ENCODE measurements at regions of chr2 and their contacts with region 1.

Region 1: GRCh38 chr2:43542285-43542937 is 53.4 kb downstream of the THADA start:
- DNase-seq: no peak
- H3K4me3 ChIP-seq: no peak overlapping the region
- CTCF ChIP-seq: peak; percentile 12

Region 2: GRCh38 chr2:42974721-42975717 is 567.4 kb before region 1 on chr2:
- CTCF ChIA-PET with region 1: interaction called, 16 read pairs
- POLR2A ChIA-PET with region 1: no interaction called
- DNase-seq: no peak
- H3K4me3 ChIP-seq: peak overlapping the region; percentile 48
- CTCF ChIP-seq: peak; percentile 99

Region 3: DNA sequence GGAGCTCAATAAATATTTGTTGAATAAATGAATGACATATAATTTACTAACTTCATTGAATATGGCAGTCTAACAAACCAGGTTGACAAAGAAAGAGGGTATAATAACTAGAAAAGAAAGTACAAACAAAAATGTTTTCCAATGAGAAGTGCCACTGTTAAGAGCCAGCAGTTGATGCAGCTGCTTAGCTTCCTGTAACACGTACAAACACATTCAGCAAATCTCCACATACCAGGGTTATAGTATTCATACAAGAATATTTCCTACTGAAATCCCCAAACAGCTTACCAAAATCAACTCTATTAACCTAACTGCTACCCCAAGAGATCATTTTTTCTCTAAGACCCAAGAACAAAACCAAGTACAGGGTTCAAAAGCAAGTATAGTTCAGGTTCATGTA is 24.2 kb before region 1 on chr2:
- CTCF ChIA-PET with region 1: interaction called, 11 read pairs
- POLR2A ChIA-PET with region 1: no interaction called
- DNase-seq: no peak
- H3K4me3 ChIP-seq: no peak overlapping the region
- CTCF ChIP-seq: no peak

Region 4: GRCh38 chr2:43524177-43524965 is 18.0 kb before region 1 on chr2:
- CTCF ChIA-PET with region 1: interaction called, 17 read pairs
- POLR2A ChIA-PET with region 1: no interaction called
- DNase-seq: no peak
- H3K4me3 ChIP-seq: no peak overlapping the region
- CTCF ChIP-seq: no peak

Region 5: GRCh38 chr2:43559391-43560230 is 17.2 kb after region 1 on chr2:
- CTCF ChIA-PET with region 1: interaction called, 15 read pairs
- POLR2A ChIA-PET with region 1: no interaction called
- DNase-seq: no peak
- H3K4me3 ChIP-seq: no peak overlapping the region
- CTCF ChIP-seq: no peak

Region 6: GRCh38 chr2:43576981-43577892 is 34.8 kb after region 1 on chr2:
- CTCF ChIA-PET with region 1: interaction called, 33 read pairs
- POLR2A ChIA-PET with region 1: no interaction called
- DNase-seq: peak; percentile 33
- H3K4me3 ChIP-seq: no peak overlapping the region
- CTCF ChIP-seq: peak; percentile 58